ENCODE measurements at regions of chr1 and their contacts with region 1.

Region 1: DNA sequence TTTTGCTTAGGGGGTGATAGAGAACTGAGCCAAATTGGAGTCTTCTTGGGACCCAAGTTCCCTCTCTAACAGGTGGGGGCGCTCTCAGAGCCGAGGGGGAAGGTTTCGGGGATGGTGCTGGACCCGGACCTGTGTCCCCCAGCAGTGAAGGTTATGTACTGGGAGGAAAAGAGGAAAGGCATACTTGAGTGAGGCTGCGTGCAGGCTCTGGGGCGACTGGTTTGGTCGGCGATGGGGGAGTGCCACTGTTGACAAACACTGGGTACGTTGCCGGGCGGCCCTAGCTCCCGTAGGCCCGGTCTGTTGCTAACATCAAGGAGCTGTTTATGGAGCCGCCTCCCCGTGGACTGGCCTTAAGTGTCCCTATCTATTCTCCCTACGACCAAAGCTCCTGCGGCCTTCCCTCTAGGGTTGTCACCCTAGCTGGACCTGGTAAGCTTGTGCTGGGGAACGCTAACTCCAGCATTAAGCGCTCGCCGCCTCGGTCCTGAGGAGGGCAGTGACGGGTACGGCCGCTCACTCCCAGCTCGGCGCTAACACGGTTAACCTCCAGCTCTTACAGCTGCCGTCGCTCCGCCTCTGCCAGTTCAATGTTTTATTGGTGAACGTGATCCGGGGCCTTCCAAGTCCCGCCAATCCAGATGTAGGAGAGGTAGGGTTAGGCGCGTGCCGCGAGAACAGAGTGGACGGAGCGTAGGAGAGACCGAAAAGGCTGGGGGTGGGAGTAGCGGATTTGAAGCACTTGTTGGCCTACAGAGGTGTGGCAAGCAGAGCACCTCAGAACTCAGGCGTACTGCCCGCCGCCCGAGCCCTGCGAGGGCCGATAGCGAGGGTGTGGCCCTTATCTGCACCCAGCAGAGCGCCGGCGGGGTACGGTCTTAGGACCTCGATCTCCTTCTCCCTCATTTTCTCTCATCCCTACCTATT is at the start of gene PPOX:
- DNase-seq: peak; percentile 90
- H3K4me3 ChIP-seq: peak within 1 kb of the TSS; percentile 80 to 90
- H3K27ac ChIP-seq: peak within 1 kb of the TSS; percentile 86 to 88
- H3K4me1 ChIP-seq: peaks cover 0 to 26% of the 10 kb centered on the region in 2 experiments; a peak in 1 of 4 replicates
- H3K27me3 ChIP-seq: no peaks in the 10 kb centered on the region
- CTCF ChIP-seq: peak; percentile 75
- EP300 ChIP-seq: no peak
- RAD21 ChIP-seq: no peak
- polyA plus RNA-seq, gene PPOX: 30.7 and 47.3 TPM in 2 replicates

Region 2: GRCh38 chr1:161177112-161177935 is 11.3 kb after region 1 on chr1 and contains the start of gene B4GALT3:
- CTCF ChIA-PET with region 1: interaction called, 29 read pairs
- POLR2A ChIA-PET with region 1: interaction called, 11 read pairs
- DNase-seq: peak; percentile 99
- H3K4me3 ChIP-seq: peak within 1 kb of the TSS; percentile 73
- H3K27ac ChIP-seq: peak within 1 kb of the TSS; percentile 44 to 77; a peak in 3 of 4 replicates
- H3K4me1 ChIP-seq: peaks cover 0 to 18% of the 10 kb centered on the region in 2 experiments; a peak in 1 of 4 replicates
- H3K27me3 ChIP-seq: no peaks in the 10 kb centered on the region
- CTCF ChIP-seq: no peak
- EP300 ChIP-seq: no peak
- RAD21 ChIP-seq: peak; percentile 43
- polyA plus RNA-seq, gene B4GALT3: 50.5 and 56.5 TPM in 2 replicates

Region 3: GRCh38 chr1:161185732-161186311 is 19.8 kb after region 1 on chr1:
- CTCF ChIA-PET with region 1: interaction called, 16 read pairs
- POLR2A ChIA-PET with region 1: no interaction called
- DNase-seq: no peak
- H3K4me3 ChIP-seq: no peak overlapping the region
- H3K27ac ChIP-seq: peak overlapping the region in 1 of 2 experiments; percentile 77; a peak in 2 of 4 replicates
- H3K4me1 ChIP-seq: peaks cover 0 to 10% of the 10 kb centered on the region in 2 experiments; a peak in 3 of 4 replicates
- H3K27me3 ChIP-seq: no peaks in the 10 kb centered on the region
- CTCF ChIP-seq: no peak
- EP300 ChIP-seq: no peak
- RAD21 ChIP-seq: no peak

Measured in SK-N-SH (cell line).